ENCODE measurements at regions of chr10 and their contacts with region 1.

Region 1: DNA sequence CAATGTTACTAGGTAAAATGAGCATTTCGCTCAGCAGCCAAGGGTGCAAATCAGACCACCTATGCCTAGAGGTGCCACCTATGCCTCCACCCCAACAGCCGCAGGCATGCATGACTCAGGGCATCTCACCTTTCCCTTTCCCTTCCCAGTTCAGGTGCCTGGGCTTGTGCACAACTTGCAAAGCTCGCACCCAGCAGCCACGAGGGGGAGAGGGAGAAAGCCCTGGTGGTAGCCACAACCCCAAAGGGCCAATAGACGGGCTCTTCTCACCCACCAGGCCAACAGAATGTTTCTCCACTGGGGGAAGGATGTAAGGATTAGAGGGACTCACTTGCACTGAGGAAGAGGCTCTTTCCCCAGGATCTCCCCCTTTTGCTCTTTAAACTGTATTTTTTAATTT is 462.3 kb upstream of the PCDH15 start:
- DNase-seq: no peak
- ATAC-seq: no peak
- H3K4me3 ChIP-seq: no peak overlapping the region
- H3K27ac ChIP-seq: no peak overlapping the region
- H3K4me1 ChIP-seq: no peaks in the 10 kb centered on the region
- H3K27me3 ChIP-seq: no peaks in the 10 kb centered on the region
- CTCF ChIP-seq: no peak

Region 2: DNA sequence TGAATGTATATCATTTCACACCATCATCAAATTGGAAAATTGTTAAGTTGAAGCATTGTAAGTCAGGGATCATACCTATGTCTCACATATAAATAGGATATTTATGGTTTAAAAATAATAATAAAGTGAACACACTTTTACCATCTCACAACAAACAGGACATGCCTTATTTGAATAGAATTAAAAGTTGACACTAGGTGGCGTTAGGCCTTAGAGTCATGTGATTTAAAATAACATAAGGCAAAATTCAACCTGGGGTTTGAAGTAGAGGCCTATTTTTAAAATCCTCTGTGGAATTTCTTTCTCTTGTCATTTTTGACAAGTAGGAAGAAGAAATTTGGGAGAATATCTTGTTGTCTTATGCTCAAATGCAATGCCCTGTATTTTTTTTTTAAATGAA is 277.6 kb before region 1 on chr10:
- intact Hi-C with region 1: loop called in 2 of 10 experiments (anchors 10 kb)
- DNase-seq: no peak
- ATAC-seq: no peak
- H3K4me3 ChIP-seq: no peak overlapping the region
- H3K27ac ChIP-seq: no peak overlapping the region
- H3K4me1 ChIP-seq: no peaks in the 10 kb centered on the region
- H3K27me3 ChIP-seq: no peaks in the 10 kb centered on the region
- CTCF ChIP-seq: peak in 8 of 9 donors; percentile 27 to 58 (median 42)

Region 3: GRCh38 chr10:55001422-55001821 is 261.9 kb before region 1 on chr10:
- intact Hi-C with region 1: loop called in 1 of 10 experiments (anchors 10 kb)
- DNase-seq: no peak
- ATAC-seq: no peak
- H3K4me3 ChIP-seq: no peak overlapping the region
- H3K27ac ChIP-seq: no peak overlapping the region
- H3K4me1 ChIP-seq: peaks cover 0 to 9% (median 0%) of the 10 kb centered on the region in 9 donors
- H3K27me3 ChIP-seq: no peaks in the 10 kb centered on the region
- CTCF ChIP-seq: no peak

Region 4: GRCh38 chr10:55203319-55203718 is 60.0 kb before region 1 on chr10:
- intact Hi-C with region 1: no loop called
- DNase-seq: no peak
- ATAC-seq: no peak
- H3K4me3 ChIP-seq: no peak overlapping the region
- H3K27ac ChIP-seq: no peak overlapping the region
- H3K4me1 ChIP-seq: no peaks in the 10 kb centered on the region
- H3K27me3 ChIP-seq: no peaks in the 10 kb centered on the region
- CTCF ChIP-seq: no peak

Region 5: GRCh38 chr10:55400075-55400849 is 136.9 kb after region 1 on chr10:
- intact Hi-C with region 1: loop called in 1 of 10 experiments (anchors 10 kb)
- DNase-seq: no peak
- ATAC-seq: no peak
- H3K4me3 ChIP-seq: no peak overlapping the region
- H3K27ac ChIP-seq: no peak overlapping the region
- H3K4me1 ChIP-seq: no peaks in the 10 kb centered on the region
- H3K27me3 ChIP-seq: no peaks in the 10 kb centered on the region
- CTCF ChIP-seq: no peak

Region 6: DNA sequence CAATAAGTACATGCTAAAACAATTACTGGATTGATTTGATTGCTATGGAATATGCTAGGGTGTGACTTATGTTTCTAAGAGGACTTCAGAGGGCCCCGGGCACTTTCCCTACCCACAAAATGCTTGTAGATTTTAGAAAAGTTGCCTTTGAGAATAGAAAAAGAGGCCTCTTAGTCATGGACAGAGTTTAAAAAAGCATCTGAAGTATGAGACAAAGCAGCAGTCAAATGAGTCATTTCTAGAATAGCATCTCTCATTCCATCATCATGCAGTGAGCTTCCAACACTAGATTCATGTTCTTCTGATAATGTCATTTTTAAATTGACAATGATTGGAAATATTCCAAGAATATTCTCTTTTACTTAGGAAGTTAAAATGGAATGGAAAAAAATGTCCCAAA is 212.8 kb after region 1 on chr10:
- intact Hi-C with region 1: no loop called
- DNase-seq: no peak
- ATAC-seq: no peak
- H3K4me3 ChIP-seq: no peak overlapping the region
- H3K27ac ChIP-seq: no peak overlapping the region
- H3K4me1 ChIP-seq: no peaks in the 10 kb centered on the region
- H3K27me3 ChIP-seq: no peaks in the 10 kb centered on the region
- CTCF ChIP-seq: no peak